ENCODE measurements at regions of chrX and their contacts with region 1.

Region 1: DNA sequence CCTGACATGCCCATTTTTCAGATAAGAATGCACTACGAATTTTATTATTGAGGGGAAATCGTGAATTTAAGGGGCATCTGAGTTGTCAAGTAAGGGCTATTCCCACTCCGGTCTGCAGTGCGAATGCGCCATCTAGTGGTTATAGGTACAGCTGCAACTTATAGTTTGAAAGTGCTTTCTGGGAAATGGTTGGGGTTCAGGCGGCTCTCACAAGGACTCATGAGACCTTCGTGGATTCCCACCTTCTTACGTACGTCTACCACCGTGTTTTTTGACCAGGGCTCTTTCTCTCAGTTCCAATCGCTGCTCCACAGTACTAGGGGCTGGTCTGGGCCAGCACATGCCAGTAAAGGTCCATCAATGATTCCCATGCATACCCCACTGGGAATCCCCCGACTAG is 12.3 kb downstream of the MSL3 start:
- DNase-seq: peak; percentile 72
- H3K4me3 Mint-ChIP-seq: no peak overlapping the region
- H3K27ac Mint-ChIP-seq: no peak overlapping the region
- H3K4me1 Mint-ChIP-seq: peaks cover 6% of the 10 kb centered on the region
- H3K27me3 Mint-ChIP-seq: peaks cover 11% of the 10 kb centered on the region
- CTCF ChIP-seq: peak; percentile 74

Region 2: DNA sequence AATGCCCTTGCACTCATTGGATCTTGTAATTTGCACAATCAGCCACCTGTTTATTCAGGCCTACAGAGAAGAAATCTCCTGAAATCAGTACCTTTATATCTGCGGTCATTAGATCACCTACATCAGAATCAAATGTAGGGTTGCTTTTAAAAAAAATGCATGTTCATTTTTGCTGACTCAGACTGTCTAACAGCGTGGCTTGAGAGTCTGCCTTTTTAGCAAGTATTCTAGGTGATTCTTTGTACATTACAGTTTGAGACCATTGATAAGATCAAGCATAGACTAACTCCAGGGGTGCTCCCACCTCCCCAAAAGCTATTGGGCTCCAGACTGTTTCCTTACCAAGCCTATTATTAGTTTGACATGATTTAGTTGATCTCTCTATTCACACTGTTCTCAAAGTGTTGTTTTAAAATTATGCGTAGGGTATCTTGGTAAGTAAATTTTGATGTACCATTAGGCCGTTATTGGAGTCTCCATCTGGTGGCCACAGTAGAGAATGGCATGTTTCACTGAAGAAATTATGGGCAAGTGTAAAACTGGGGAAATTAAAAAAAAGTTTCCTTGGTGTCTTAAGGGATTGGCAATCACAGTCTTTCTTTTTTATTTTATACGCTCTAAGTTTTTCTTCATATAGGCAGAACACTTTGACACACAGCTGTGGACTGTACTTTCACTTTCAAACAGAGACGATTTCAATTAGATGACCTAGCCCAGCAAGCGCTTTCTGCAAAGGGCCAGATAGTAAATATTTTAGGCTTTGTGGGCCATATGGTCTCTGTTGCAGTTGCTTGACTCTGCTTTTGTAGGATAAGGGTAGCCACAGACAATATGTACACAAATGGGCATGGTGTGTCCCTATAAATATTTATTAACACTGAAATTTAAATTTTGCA is 46.0 kb before region 1 on chrX:
- CTCF ChIA-PET with region 1: interaction called, 6 read pairs
- POLR2A ChIA-PET with region 1: no interaction called
- intact Hi-C with region 1: loop called (anchors 1 kb)
- DNase-seq: peak; percentile 58
- H3K4me3 Mint-ChIP-seq: no peak overlapping the region
- H3K27ac Mint-ChIP-seq: no peak overlapping the region
- H3K4me1 Mint-ChIP-seq: no peaks in the 10 kb centered on the region
- H3K27me3 Mint-ChIP-seq: peaks cover 44% of the 10 kb centered on the region
- CTCF ChIP-seq: peak; percentile 52

Region 3: DNA sequence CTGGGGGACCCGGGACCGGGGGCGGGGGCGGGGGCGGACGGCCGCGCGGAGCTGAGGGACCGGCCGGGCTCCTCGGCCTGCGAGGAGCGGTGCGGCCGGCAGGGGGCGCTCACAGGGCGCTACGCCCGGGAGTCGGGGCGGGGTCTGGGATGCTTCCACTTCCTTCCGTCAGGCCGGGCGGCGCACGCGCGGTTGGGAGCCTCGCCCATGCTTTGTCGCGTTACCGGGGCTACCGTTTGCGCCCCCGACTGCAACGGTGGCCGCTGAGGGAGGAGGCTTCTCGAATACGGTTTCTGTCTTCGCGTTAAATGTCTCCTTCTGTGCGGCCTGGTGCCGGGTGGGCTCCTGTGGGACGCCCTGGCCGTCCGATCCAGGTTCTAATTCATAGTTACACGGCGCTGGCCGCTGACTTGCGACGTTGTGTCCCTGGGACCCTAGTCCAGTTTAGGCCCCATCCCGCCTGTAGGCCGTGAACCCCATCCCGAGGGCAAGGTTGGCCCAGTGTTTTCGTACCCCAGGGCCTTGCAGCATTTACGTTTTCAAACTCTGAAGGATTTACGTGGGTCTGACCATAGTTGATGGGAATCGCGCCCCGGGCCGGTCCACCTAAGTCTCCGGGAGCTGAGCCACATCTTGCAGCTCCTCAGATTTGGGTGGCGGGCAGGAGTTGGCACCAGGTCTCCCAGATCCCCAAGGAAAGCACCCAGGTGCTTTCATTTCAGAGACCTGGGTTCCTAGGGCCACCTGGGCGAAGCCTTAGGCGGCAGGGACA is 11.7 kb before region 1 on chrX:
- CTCF ChIA-PET with region 1: interaction called, 25 read pairs
- POLR2A ChIA-PET with region 1: interaction called, 3 read pairs
- intact Hi-C with region 1: no loop called
- DNase-seq: peak; percentile 72
- H3K4me3 Mint-ChIP-seq: peak overlapping the region; percentile 82
- H3K27ac Mint-ChIP-seq: peak overlapping the region; percentile 84
- H3K4me1 Mint-ChIP-seq: peaks cover 5% of the 10 kb centered on the region
- H3K27me3 Mint-ChIP-seq: peaks cover 28% of the 10 kb centered on the region
- CTCF ChIP-seq: peak; percentile 71

Region 4: GRCh38 chrX:11787564-11787963 is 17.2 kb after region 1 on chrX:
- CTCF ChIA-PET with region 1: interaction called, 16 read pairs
- POLR2A ChIA-PET with region 1: no interaction called
- intact Hi-C with region 1: no loop called
- DNase-seq: peak; percentile 67
- H3K4me3 Mint-ChIP-seq: peak overlapping the region; percentile 35
- H3K27ac Mint-ChIP-seq: no peak overlapping the region
- H3K4me1 Mint-ChIP-seq: no peaks in the 10 kb centered on the region
- H3K27me3 Mint-ChIP-seq: peaks cover 10% of the 10 kb centered on the region
- CTCF ChIP-seq: peak; percentile 46